MCF 10A (cell line): ENCODE measurements at regions of chr1 and their contacts with region 1.

Region 1: GRCh38 chr1:78114034-78114956 is 68.5 kb downstream of the GIPC2 start:
- DNase-seq: peak; percentile 84
- H3K4me3 Mint-ChIP-seq: no peak overlapping the region
- H3K27ac Mint-ChIP-seq: peak overlapping the region; percentile 47
- H3K4me1 Mint-ChIP-seq: peaks cover 6% of the 10 kb centered on the region
- H3K27me3 Mint-ChIP-seq: no peaks in the 10 kb centered on the region
- CTCF ChIP-seq: peak; percentile 91

Region 2: GRCh38 chr1:77683160-77684148 is 430.8 kb before region 1 on chr1:
- CTCF ChIA-PET with region 1: interaction called, 5 read pairs
- POLR2A ChIA-PET with region 1: no interaction called
- intact Hi-C with region 1: loop called (anchors 1 kb)
- DNase-seq: peak; percentile 89
- H3K4me3 Mint-ChIP-seq: peak overlapping the region; percentile 89
- H3K27ac Mint-ChIP-seq: peak overlapping the region; percentile 99
- H3K4me1 Mint-ChIP-seq: peaks cover 28% of the 10 kb centered on the region
- H3K27me3 Mint-ChIP-seq: no peaks in the 10 kb centered on the region
- CTCF ChIP-seq: peak; percentile 94

Region 3: DNA sequence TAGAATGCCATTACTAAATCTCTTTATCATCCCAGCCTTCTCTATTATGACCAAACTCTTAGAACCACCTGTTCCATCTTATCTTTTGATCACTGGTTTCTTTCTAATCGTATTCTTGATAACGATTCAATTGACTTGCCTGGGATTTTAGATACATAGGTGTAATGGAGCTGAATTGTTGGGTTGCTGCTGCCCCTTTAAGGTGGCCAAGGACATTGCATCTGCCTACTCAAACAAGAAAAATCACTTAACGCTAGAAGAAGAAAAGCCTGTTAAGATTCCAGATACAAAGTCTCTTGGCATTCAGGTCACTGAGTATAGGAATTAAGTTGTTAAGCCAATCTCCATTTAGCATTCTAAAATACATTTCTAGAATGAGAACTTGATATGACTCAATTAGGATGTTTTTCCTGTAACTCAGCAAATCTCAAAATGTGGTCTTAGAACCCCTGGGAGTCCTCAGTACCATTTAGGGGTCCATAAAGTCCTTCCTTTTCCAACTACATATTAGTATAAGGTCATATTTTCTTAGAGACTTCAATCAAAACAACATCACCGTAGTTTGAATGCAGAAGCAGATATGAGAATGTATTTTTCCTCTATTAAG is 213.5 kb before region 1 on chr1:
- CTCF ChIA-PET with region 1: interaction called, 8 read pairs
- POLR2A ChIA-PET with region 1: no interaction called
- intact Hi-C with region 1: loop called (anchors 2 kb)
- DNase-seq: peak; percentile 66
- H3K4me3 Mint-ChIP-seq: no peak overlapping the region
- H3K27ac Mint-ChIP-seq: no peak overlapping the region
- H3K4me1 Mint-ChIP-seq: peaks cover 17% of the 10 kb centered on the region
- H3K27me3 Mint-ChIP-seq: no peaks in the 10 kb centered on the region
- CTCF ChIP-seq: peak; percentile 85

Region 4: DNA sequence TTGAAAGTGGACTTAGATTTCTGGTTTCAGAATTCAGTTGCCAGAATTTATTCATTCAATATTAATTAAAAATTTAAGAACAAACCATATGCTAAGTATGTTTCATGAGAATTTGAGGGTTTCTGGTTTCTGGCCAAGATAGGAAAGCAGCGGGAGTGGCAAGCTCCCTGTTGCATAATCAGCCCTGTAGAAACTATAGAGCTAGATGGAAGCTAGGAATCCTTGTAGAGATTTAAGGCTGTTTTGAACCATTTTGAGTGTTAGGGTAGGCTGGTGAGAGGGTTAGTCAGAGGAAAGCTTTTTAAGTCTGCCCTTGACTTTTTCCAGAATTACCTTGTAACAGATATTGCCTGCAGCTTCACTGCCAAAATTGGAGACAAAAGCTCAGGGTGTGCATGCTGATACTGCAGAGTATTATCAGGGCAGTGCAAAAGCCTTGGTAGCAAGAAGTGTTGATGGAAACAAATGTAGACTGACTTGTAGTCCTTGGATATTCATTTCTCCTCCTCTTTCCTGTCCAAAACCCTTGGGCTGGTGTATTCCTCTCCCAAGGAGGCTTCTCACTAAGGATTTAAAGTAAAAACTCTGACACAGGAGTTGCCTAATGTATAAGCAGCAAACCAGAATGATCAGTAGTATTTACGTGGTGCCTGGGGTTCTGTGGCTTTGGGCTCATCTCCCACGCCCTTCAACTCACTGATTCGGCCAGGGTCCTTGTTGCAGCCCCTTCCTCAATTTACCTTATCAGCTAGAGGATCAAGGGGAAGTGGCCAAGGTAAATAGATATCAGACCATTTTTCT is 81.1 kb before region 1 on chr1:
- CTCF ChIA-PET with region 1: interaction called, 21 read pairs
- POLR2A ChIA-PET with region 1: interaction called, 18 read pairs
- intact Hi-C with region 1: no loop called
- DNase-seq: peak; percentile 73
- H3K4me3 Mint-ChIP-seq: no peak overlapping the region
- H3K27ac Mint-ChIP-seq: no peak overlapping the region
- H3K4me1 Mint-ChIP-seq: peaks cover 19% of the 10 kb centered on the region
- H3K27me3 Mint-ChIP-seq: no peaks in the 10 kb centered on the region
- CTCF ChIP-seq: no peak

Region 5: DNA sequence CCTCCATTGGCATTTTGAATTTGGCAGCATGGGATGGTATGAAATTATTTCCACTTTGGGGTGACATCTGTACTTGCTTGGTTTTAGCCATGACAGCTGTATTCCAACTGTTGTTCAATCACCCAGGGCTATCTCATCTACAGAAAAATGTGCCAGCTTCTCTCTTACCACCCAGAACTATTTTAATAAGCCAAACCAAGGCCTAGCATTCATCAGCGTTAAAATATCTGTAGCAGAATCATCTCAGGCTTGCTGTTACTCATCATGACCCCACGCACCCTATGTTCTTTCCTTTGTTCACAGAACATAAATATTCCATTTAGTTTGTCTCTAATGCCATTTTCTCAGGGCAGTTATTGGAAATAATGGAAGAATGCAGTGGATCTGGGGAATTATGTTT is 18.7 kb before region 1 on chr1:
- CTCF ChIA-PET with region 1: interaction called, 24 read pairs
- POLR2A ChIA-PET with region 1: interaction called, 11 read pairs
- intact Hi-C with region 1: no loop called
- DNase-seq: peak; percentile 20
- H3K4me3 Mint-ChIP-seq: no peak overlapping the region
- H3K27ac Mint-ChIP-seq: peak overlapping the region; percentile 41
- H3K4me1 Mint-ChIP-seq: peaks cover 25% of the 10 kb centered on the region
- H3K27me3 Mint-ChIP-seq: no peaks in the 10 kb centered on the region
- CTCF ChIP-seq: no peak

Region 6: GRCh38 chr1:78229344-78229743 is 115.0 kb after region 1 on chr1:
- CTCF ChIA-PET with region 1: no interaction called
- POLR2A ChIA-PET with region 1: no interaction called
- intact Hi-C with region 1: no loop called
- DNase-seq: peak; percentile 94
- H3K4me3 Mint-ChIP-seq: peak overlapping the region; percentile 20
- H3K27ac Mint-ChIP-seq: peak overlapping the region; percentile 63
- H3K4me1 Mint-ChIP-seq: peaks cover 42% of the 10 kb centered on the region
- H3K27me3 Mint-ChIP-seq: no peaks in the 10 kb centered on the region
- CTCF ChIP-seq: no peak